CD4-positive, alpha-beta memory T cell (primary cell): ENCODE measurements at regions of chr1 and their contacts with region 1.

Region 1: DNA sequence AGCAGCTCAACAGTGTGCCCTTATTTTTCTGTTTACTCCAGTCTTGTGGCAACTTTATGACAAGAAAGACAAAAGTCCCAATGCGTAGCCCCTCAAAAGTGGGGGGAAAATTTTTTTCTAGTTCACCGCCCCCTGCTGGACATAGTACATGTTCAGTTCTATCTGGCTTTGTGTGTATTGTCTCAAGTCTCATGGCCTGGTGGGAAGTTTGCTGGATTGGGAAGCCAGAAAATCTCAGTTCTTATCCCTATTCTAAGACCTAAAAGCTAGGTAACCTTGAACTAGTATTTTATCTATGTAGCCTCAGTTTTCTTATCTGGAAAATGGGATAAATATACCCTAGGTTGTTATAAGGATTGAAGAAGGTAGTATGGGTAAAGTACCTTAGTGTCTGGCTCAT is 55.8 kb upstream of the LDLRAP1 start:
- DNase-seq: peak in 4 of 5 donors; percentile 20 to 26 (median 23)
- H3K4me3 ChIP-seq: no peak overlapping the region
- H3K4me3 Mint-ChIP-seq: no peak overlapping the region
- H3K27ac ChIP-seq: no peak overlapping the region
- H3K27ac Mint-ChIP-seq: peak overlapping the region in 5 of 7 donors; percentile 4 to 78 (median 50)
- H3K4me1 ChIP-seq: peaks cover 7% of the 10 kb centered on the region
- H3K4me1 Mint-ChIP-seq: peaks cover 2 to 11% (median 5%) of the 10 kb centered on the region in 4 donors
- H3K27me3 ChIP-seq: no peaks in the 10 kb centered on the region
- H3K27me3 Mint-ChIP-seq: no peaks in the 10 kb centered on the region

Region 2: GRCh38 chr1:25476186-25477097 is 11.2 kb before region 1 on chr1:
- CTCF ChIA-PET with region 1: interaction called, 20 read pairs
- POLR2A ChIA-PET with region 1: no interaction called
- intact Hi-C with region 1: no loop called
- DNase-seq: no peak
- H3K4me3 ChIP-seq: no peak overlapping the region
- H3K4me3 Mint-ChIP-seq: no peak overlapping the region
- H3K27ac ChIP-seq: no peak overlapping the region
- H3K27ac Mint-ChIP-seq: peak overlapping the region in 4 of 7 donors; percentile 6 to 75 (median 40)
- H3K4me1 ChIP-seq: peaks cover 30% of the 10 kb centered on the region
- H3K4me1 Mint-ChIP-seq: peaks cover 24 to 45% (median 35%) of the 10 kb centered on the region in 4 donors
- H3K27me3 ChIP-seq: no peaks in the 10 kb centered on the region
- H3K27me3 Mint-ChIP-seq: no peaks in the 10 kb centered on the region